G401 (cell line): ENCODE measurements at regions of chr7 and their contacts with region 1.

Region 1: GRCh38 chr7:75762314-75762917 is 9.6 kb downstream of the CCL26 start:
- DNase-seq: peak; percentile 68

Region 2: DNA sequence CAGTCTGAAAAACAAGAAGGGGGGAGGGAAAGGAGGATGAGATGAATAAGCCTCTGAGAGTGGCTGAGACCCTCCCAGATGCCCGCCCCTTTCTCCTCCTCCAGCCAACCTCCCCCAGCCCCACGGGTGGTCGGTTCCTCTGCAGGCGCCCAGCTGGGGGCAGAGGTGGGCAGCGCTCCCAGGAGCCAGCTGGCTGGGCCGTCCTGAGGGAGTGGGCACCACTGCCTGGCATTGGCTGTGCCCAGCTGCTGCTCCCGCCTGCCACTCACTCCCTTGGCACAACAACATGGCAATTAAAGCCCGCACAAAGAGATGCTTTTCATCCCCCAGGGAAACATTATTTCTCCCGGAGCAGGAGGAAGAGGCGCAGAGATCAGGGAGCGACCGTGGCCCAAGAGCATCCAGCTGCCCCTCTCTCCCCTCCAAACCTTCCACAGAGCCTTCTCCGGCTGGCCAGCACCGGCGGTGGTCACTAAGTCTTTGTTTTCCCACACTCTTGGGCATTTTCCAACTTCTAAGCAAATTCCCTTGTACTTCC is 163.1 kb before region 1 on chr7:
- in situ Hi-C with region 1: loop called (anchors 25 kb)
- DNase-seq: peak; percentile 35

Region 3: GRCh38 chr7:75662579-75663301 is 99.7 kb before region 1 on chr7:
- in situ Hi-C with region 1: loop called (anchors 25 kb)
- DNase-seq: no peak

Region 4: DNA sequence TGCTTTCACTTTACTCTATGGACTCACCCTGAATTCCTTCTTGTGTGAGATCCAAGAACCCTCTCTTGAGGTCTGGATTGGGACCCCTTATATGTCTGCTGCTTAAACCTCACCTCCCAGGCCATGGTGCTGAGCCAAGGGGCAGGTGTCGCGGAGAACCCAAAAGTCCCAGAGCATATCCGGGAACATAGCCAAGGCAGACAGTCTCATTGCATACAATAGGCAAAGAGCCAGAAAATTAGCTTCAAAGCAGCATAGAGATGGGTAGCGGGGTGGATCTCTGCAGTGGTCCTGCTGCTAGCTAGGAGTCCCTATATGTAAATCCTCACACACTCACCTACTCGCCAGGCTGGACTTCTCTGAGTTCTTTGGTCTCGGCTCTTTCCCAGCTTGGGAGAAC is 45.7 kb after region 1 on chr7:
- in situ Hi-C with region 1: no loop called
- DNase-seq: no peak

Region 5: DNA sequence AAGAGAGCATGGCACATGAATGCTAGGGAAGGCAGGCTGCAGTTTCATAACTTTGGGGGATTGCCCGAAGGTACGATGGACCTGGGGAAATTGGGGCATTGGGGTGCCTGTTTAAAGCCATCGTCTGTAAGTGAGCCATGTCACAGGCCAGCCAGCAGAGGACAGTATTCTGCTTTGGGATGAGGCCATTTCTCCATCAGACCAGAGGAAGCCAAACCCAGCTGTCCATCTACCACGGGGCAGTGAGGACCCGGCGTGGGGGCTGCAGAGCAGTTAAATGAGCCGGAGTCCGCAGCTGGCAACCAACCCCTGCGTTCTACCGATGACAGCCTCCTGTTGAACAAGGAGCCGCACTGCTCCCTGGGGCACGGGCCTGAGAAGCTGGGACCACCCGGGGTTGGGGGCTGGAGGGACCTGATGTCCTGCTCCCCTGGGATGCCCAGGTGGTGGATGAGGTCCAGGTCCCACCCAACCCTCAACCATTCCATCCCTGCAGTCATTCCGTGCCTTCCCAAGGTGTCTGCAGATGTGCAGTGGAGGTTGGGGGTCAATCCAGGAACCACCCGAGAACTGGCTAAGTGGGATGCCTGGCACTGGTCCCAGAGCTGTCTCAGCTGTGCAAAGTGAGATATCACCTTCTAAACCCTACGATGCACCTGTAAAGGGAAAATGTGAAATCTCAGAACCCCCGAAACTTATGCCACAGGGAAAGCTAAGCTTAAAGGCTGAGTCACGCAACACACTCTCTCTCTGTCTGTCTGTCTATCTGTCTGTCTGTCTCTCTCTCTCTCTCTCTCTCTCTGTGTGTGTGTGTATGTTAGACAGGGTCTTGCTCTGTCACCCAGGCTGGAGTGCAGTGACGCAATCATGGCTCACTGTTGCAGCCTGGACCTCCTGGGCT is 104.3 kb after region 1 on chr7:
- in situ Hi-C with region 1: no loop called
- DNase-seq: peak; percentile 80

Region 6: GRCh38 chr7:76095908-76096307 is 333.5 kb after region 1 on chr7:
- in situ Hi-C with region 1: no loop called
- DNase-seq: no peak